ENCODE measurements at regions of chr20 and their contacts with region 1.

Region 1: GRCh38 chr20:13819885-13820645 is 35.2 kb downstream of the NDUFAF5 start:
- DNase-seq: no peak

Region 2: DNA sequence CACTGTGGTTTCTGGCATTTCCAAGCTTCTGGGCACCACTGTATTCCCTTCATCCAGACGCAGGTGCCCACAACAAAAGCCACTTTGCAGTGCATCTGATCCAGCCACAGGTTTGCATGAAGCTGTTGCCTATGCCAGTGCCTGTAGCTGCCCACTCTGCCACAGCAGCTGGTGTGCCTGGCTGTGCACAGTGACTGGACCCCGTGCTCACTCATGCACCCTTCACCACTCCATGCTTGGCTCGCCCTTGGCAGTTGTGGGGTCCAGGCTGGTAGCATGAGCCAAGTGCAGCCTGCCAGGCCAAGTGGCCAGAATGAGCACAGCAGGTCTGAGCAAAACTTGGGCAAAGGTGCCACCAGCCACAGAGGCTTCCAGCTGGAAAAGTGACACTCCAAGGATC is 127.7 kb after region 1 on chr20:
- intact Hi-C with region 1: loop called in 1 of 2 experiments (anchors 10 kb)
- DNase-seq: no peak

Region 3: GRCh38 chr20:14055127-14055742 is 235.2 kb after region 1 on chr20:
- intact Hi-C with region 1: loop called in 1 of 2 experiments (anchors 10 kb)
- DNase-seq: no peak

Region 4: DNA sequence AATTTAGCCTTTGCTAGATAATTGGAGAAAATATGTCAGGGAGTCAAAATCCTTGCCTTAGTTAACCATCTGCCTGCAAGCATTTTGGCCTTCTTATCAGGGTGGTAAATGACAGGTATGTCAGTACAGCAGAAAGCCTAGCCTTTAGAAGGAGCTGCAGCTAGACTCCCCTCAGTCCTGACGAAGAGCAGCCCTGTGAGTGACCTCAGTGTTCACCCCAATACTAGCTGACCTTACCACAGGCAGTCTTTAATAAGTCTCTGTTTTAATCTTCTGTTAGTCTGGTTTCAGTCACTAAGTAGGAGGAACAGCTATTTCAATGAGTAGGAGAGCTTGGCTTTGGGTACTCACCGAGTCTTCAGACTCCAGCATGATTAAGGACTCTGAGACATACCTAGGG is 857.4 kb after region 1 on chr20:
- intact Hi-C with region 1: no loop called
- DNase-seq: no peak

Measured in posterior vena cava (tissue), 2 donors.